ENCODE measurements at regions of chr14 and their contacts with region 1.

Region 1: GRCh38 chr14:39276005-39276404 is 42.3 kb downstream of the MIA2 start:
- DNase-seq: no peak

Region 2: DNA sequence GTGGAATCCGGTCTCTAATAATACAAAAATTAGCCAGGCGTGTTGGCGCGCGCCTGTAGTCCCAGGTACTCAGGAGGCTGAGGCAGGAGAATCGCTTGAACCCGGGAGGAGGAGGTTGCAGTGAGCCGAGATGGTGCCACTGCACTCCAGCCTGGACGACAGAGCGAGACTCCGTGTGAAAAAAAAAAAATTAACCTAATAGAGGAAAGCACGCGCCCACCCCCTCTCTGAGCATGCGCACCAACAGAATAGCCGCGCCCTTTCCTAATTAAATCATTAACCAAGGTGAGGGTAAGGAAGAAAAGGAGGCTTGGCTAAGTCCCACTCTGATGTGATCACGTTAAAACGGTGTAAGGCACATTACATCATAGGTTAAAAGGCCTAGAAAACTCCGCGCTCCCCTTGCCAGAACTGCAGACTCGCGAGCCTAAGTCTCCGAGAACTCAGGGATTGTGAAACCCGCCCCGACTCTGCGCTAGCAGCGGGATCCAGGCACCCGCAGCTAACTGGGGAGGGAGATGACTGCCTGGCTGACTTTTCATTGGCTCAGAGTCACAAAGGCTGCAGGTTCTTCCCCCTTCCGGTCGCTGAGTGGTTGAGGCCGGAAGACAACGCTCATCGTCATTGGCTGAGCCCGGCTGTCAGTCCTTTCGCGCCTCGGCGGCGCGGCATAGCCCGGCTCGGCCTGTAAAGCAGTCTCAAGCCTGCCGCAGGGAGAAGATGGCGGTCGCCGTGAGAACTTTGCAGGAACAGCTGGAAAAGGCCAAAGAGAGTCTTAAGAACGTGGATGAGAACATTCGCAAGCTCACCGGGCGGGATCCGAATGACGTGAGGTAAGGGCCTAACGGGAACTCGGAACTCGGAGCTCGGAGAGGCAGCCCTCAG is 101.2 kb before region 1 on chr14 and contains the start of gene PNN:
- intact Hi-C with region 1: loop called in 1 of 2 experiments (anchors 10 kb)
- DNase-seq: peak; percentile 98
- total RNA-seq, gene PNN: 37.7 to 42.6 TPM